Lower lobe of right lung (tissue), 2 donors: ENCODE measurements at regions of chr3 and their contacts with region 1.

Region 1: DNA sequence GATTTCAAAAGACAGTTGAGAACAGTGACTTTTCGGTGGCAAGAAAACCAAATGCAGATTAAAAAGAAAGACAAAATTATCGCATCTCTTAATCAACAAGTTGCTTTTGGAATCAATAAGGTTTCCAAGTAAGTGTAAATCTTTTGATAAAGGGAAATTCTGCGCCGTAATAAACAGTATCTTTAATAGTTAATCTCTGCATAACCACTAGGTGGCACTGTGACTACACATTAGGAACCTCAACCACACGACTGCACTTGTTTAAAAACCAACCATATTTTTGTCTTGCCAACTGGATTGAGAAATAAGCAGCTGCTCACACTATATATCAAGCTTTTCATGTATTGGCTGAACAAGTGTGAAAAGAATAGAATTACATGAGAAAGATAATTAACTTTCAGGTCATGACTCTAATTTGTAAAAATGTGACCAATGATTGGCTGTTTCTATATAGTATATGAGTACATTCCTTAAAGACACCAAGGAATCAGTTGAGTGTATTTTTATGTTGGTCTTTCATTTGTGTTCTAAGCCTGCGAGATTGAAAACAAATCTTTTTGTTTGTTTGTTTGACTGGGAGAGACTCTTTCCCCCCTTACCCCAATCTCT is 72.7 kb downstream of the DZIP3 start:
- DNase-seq: no peak
- ATAC-seq: peak; percentile 83 to 86
- H3K4me3 ChIP-seq: no peak overlapping the region
- H3K27ac ChIP-seq: no peak overlapping the region
- H3K4me1 ChIP-seq: peaks cover 6% of the 10 kb centered on the region
- H3K27me3 ChIP-seq: no peaks in the 10 kb centered on the region
- CTCF ChIP-seq: peak; percentile 73

Region 2: DNA sequence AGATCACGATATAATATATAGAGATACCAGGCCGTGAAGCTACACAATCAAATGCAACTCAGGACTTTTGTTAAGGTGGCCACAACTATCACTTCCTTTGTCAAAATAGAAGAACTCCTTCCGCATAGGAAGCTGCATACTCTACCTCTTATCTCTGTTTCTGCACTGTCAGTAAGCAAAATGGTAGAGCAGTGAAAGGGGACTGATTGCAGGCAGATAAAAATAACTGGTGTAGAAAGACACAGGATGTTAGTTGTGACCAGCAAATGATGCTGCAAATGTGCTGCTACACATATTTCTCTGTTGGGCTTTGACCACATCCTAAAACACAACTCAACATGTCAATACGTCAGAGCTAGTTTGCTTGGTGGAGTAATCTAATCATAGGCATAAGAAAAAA is 144.1 kb after region 1 on chr3:
- intact Hi-C with region 1: no loop called
- DNase-seq: no peak
- ATAC-seq: peak; percentile 47 to 63
- H3K4me3 ChIP-seq: no peak overlapping the region
- H3K27ac ChIP-seq: no peak overlapping the region
- H3K4me1 ChIP-seq: no peaks in the 10 kb centered on the region
- H3K27me3 ChIP-seq: no peaks in the 10 kb centered on the region
- CTCF ChIP-seq: no peak

Region 3: DNA sequence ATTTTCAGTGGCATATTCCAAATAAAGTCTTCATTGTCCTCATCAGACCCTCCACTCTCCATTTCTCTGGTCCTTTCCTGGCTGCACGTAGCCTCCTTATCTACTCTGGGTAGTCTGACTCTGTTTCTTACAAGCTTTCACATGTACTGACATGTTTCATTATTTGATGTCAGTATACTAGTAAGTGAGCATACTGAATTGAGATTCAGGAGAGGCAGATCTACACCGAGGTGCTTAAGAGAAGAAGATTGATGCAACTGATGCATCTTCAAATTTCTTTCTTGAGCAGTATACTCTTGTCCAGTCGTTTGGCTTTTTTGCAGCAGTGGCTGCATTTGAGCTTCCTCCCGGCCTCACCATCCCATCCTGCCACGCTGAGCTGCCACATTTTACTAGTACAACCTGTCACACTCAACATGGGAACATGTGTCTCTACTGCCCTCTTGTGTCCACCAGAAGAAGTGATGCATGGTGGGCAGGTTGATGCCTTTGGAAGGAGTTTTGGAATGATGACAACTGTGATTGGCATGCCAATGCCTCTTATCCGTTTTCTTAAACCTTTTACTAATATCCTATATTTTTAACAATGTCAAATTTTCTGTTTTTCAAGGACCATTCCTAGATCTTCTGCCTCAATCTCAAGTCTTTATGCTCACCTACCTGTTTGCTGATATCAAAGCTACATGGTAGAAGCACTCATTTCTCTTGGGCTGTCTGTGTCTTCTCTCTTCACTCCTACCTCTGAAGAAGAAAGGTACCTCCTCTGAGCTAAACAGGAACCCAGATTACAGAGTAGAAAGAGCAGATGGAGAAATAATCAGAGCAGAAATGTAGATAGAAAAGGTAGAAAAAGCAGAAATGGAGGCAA is 252.8 kb after region 1 on chr3:
- intact Hi-C with region 1: loop called (anchors 5 kb)
- DNase-seq: no peak
- ATAC-seq: peak; percentile 82 to 86
- H3K4me3 ChIP-seq: no peak overlapping the region
- H3K27ac ChIP-seq: no peak overlapping the region
- H3K4me1 ChIP-seq: no peaks in the 10 kb centered on the region
- H3K27me3 ChIP-seq: no peaks in the 10 kb centered on the region
- CTCF ChIP-seq: peak; percentile 78

Region 4: DNA sequence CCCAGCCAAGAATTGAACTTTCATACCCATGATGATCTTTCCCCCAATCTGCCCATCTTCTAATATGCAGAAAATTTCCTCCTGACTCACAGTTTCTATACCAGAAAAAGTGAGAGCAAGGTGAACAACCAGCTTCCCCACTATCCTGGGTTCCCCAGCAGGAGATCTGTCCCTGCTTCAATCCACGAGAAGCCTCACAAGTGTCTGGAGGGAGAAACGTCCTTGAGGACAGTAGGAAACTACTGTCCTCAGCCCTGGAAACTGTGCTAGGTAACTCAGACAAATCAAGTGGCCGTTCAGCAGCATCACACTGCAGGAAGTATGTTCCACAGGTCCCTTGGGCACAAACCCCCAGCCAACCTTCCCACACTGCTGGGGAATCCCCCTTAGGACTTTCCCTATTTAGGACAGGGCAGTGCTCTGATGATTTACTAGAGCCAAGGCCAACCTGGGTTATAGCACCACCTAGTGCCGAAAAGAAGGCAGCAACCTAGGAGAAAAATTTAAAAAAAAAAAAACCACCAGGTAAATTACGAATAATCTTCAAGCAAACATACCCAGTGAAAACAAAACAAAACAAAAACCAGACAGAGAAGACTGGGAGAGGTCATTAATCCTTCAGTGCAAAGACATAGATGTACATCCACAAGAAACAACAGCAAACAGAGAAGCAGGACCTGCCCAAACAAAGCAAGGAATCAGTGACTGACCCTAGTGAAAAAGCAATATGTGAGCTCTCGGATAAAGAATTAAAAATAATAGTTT is 419.7 kb after region 1 on chr3:
- intact Hi-C with region 1: loop called (anchors 10 kb)
- DNase-seq: no peak
- ATAC-seq: peak; percentile 85 to 87
- H3K4me3 ChIP-seq: no peak overlapping the region
- H3K27ac ChIP-seq: no peak overlapping the region
- H3K4me1 ChIP-seq: no peaks in the 10 kb centered on the region
- H3K27me3 ChIP-seq: no peaks in the 10 kb centered on the region
- CTCF ChIP-seq: peak; percentile 67